PC-3 (cell line): ENCODE measurements at regions of chr13 and their contacts with region 1.

Region 1: DNA sequence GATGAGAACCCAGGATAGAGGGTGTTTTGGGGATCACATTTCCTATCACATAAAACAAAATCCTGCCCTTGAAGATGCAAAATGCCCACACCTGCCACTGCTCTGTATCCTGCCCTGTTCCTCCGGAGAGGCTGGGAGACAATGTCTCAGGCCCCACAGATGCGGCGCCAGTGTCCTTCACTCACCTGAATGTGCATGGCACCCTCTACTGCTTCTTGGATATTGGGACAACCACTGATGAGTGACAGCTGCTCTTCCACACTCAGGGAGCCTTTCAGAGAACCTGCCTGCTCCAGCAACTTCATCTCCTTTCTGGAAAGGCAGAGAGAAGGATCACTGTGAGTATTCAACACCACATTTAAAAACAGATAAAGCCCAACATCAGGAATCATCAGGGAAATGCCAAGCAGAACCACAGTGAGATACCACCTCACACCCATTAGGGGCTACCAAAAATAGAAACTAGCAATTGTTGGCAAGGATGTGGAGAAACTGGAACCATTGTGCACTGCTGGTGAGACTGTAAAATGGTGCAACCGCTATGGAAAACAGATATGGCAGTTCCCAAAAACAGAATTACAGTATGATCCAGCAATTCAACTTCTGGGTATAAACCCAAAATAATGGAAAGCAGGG is 36.4 kb downstream of the CRYL1 start:
- DNase-seq: peak; percentile 51
- ATAC-seq: peak; percentile 68
- H3K4me3 ChIP-seq: no peak overlapping the region
- H3K27ac ChIP-seq: no peak overlapping the region
- H3K4me1 ChIP-seq: peaks cover 15% of the 10 kb centered on the region
- H3K27me3 ChIP-seq: no peaks in the 10 kb centered on the region
- CTCF ChIP-seq: peak; percentile 61

Region 2: DNA sequence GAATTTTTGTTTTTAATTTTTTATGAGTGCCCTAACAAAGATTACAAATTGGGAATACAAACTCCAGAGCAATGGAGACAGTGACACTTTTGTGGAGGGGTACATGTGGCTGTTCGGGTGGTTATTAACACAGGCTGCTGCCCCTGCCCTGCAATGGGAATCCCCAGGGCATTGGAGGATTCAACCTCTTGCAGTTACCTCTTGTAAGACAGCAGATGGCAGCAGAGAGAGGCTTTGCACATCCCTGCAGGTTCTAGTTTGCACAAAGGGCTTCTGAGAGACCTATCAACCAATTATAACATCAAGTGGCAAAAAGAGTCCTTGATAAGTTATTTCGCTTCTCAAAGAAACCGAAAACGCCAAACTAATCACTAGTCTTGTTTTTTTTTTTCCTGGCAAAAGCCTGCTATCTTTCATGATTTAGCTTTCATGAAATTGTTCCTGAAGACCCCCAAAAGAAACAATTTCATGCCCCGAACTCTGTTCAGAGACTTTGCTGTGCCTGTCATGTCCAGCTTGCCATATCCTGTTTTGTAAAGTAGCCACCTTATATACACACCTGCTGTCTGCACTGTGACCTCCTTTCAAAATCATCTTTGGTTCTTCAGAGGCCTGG is 307.0 kb before region 1 on chr13:
- CTCF ChIA-PET with region 1: interaction called, 4 read pairs
- POLR2A ChIA-PET with region 1: no interaction called
- intact Hi-C with region 1: loop called (anchors 2 kb)
- DNase-seq: peak; percentile 86
- ATAC-seq: peak; percentile 98
- H3K4me3 ChIP-seq: no peak overlapping the region
- H3K27ac ChIP-seq: no peak overlapping the region
- H3K4me1 ChIP-seq: no peaks in the 10 kb centered on the region
- H3K27me3 ChIP-seq: no peaks in the 10 kb centered on the region
- CTCF ChIP-seq: peak; percentile 91

Region 3: DNA sequence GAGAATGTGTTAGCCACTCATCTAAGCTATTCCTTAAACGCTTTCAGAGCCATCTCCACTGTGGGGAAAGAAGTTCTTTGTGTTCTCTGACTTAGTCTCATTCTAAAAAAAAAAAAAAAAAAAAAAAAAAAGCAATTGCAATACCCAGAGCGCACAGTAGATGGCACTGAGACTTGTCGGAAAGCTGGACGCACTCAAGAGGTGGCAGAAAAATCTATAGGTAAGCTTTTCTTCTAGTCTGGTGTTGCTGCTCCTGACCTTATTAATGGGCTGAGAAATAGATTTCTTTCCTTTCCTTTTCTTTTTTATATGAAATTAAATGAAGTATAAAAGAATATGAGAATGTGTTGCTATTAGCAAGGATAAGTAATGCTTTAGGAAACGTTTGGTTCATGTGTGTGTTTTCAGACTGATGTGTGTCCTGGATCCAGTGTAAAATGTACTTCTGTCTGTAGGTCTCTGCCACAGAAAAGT is 291.9 kb before region 1 on chr13:
- CTCF ChIA-PET with region 1: interaction called, 3 read pairs
- POLR2A ChIA-PET with region 1: no interaction called
- intact Hi-C with region 1: loop called (anchors 5 kb)
- DNase-seq: peak; percentile 83
- ATAC-seq: peak; percentile 39
- H3K4me3 ChIP-seq: peak overlapping the region; percentile 50; the same call in 1 of the 2 replicates
- H3K27ac ChIP-seq: no peak overlapping the region
- H3K4me1 ChIP-seq: peaks cover 21% of the 10 kb centered on the region
- H3K27me3 ChIP-seq: no peaks in the 10 kb centered on the region
- CTCF ChIP-seq: peak; percentile 84

Region 4: GRCh38 chr13:20219577-20219976 is 269.7 kb before region 1 on chr13:
- CTCF ChIA-PET with region 1: no interaction called
- POLR2A ChIA-PET with region 1: no interaction called
- intact Hi-C with region 1: no loop called
- DNase-seq: no peak
- ATAC-seq: no peak
- H3K4me3 ChIP-seq: no peak overlapping the region
- H3K27ac ChIP-seq: no peak overlapping the region
- H3K4me1 ChIP-seq: no peaks in the 10 kb centered on the region
- H3K27me3 ChIP-seq: no peaks in the 10 kb centered on the region
- CTCF ChIP-seq: no peak

Region 5: GRCh38 chr13:20585371-20585770 is 96.1 kb after region 1 on chr13:
- CTCF ChIA-PET with region 1: interaction called, 12 read pairs
- POLR2A ChIA-PET with region 1: no interaction called
- intact Hi-C with region 1: no loop called
- DNase-seq: no peak
- ATAC-seq: no peak
- H3K4me3 ChIP-seq: no peak overlapping the region
- H3K27ac ChIP-seq: no peak overlapping the region
- H3K4me1 ChIP-seq: no peaks in the 10 kb centered on the region
- H3K27me3 ChIP-seq: no peaks in the 10 kb centered on the region
- CTCF ChIP-seq: no peak

Region 6: GRCh38 chr13:20711301-20712044 is 222.2 kb after region 1 on chr13:
- CTCF ChIA-PET with region 1: no interaction called
- POLR2A ChIA-PET with region 1: no interaction called
- intact Hi-C with region 1: no loop called
- DNase-seq: no peak
- ATAC-seq: no peak
- H3K4me3 ChIP-seq: no peak overlapping the region
- H3K27ac ChIP-seq: no peak overlapping the region
- H3K4me1 ChIP-seq: peaks cover 3% of the 10 kb centered on the region; the same call in 1 of the 2 replicates
- H3K27me3 ChIP-seq: no peaks in the 10 kb centered on the region
- CTCF ChIP-seq: no peak